Lower leg skin (tissue), 4 donors: ENCODE measurements at regions of chr20 and their contacts with region 1.

Region 1: GRCh38 chr20:45322952-45323383 is 14.9 kb upstream of the MATN4 start:
- DNase-seq: peak in 1 of 2 donors; percentile 68
- H3K4me3 ChIP-seq: no peak overlapping the region
- CTCF ChIP-seq: no peak
- POLR2A ChIP-seq: no peak

Region 2: DNA sequence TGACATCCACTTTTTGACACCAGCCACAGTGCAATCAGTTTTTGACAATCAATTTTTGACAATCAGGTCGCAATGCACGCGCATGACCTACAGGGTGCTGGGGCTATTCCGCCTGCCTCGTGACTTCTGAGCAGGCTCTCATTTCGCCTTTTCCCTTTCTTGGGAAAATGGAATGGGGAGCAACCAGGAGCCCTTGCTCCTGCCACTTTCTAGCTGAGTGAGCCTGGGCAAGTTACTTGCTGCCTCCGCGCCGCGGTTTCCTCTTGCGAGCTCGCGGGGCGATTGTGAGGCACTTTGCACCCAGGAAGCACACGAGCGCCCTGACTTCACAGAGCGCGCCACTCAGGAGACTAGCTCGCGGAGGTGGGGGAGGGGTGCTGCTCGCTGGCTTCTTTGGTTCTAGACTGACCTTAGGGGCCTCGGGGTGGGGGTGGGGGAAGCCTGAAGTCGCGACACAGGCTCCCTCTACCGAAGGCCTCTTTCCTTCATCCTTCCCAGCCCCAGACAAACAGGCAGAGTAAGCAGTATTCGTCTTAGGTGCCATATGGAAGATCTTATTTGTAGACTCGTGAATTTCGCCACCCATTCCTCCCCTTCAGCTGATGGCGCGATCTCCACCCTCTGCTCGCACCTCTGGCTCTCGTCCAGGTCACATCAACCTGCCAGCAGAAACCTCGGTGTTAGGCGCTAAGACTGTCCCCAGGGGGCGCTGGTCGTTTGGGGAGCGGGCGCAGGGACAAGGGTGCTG is 50.6 kb after region 1 on chr20:
- intact Hi-C with region 1: loop called (anchors 5 kb)
- DNase-seq: peak; percentile 79 to 97
- H3K4me3 ChIP-seq: peak overlapping the region; percentile 24
- CTCF ChIP-seq: peak in 1 of 3 donors; percentile 81
- POLR2A ChIP-seq: no peak

Region 3: GRCh38 chr20:45436732-45437391 is 113.9 kb after region 1 on chr20:
- intact Hi-C with region 1: loop called (anchors 2 kb)
- DNase-seq: peak; percentile 85 to 98
- H3K4me3 ChIP-seq: peak overlapping the region; percentile 6
- CTCF ChIP-seq: peak in 1 of 3 donors; percentile 92
- POLR2A ChIP-seq: no peak

Region 4: DNA sequence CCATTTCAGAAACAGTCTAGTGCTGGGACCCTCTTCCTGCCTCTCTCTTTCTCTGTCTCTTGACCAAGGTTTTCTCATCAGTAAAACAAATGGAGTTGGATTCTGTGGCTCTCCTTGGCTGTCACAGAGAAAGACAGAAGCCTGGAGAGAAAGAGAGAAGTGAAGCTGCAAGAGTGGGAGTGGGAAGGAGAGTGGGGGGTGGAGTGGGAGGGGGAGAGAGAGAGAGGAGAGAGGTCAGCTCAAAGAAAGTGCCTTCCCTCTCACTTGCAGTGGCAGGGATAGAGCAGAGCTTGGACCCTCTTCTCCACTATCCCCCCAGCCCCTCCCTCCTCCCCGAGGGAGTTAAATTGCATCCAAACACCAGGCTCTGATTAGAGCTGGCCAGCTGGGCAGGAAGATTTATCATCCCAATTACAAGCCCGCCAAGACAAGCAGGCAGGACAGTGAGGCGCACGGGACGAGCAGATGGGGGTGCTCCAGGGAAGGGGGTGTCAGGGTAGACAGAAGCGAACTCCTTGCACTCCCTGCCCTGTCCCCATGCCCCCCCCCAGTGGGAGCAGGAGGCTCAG is 869.5 kb after region 1 on chr20:
- intact Hi-C with region 1: no loop called
- DNase-seq: no peak
- H3K4me3 ChIP-seq: no peak overlapping the region
- CTCF ChIP-seq: no peak
- POLR2A ChIP-seq: no peak